Esophagus muscularis mucosa (tissue), 4 donors: ENCODE measurements at regions of chr17 and their contacts with region 1.

Region 1: GRCh38 chr17:76307299-76307965 is 644 bp downstream of the QRICH2 start:
- DNase-seq: no peak
- H3K4me3 ChIP-seq: no peak overlapping the region
- H3K27ac ChIP-seq: no peak overlapping the region
- H3K4me1 ChIP-seq: no peaks in the 10 kb centered on the region
- H3K27me3 ChIP-seq: no peaks in the 10 kb centered on the region
- CTCF ChIP-seq: no peak
- EP300 ChIP-seq: no peak
- POLR2A ChIP-seq: no peak

Region 2: DNA sequence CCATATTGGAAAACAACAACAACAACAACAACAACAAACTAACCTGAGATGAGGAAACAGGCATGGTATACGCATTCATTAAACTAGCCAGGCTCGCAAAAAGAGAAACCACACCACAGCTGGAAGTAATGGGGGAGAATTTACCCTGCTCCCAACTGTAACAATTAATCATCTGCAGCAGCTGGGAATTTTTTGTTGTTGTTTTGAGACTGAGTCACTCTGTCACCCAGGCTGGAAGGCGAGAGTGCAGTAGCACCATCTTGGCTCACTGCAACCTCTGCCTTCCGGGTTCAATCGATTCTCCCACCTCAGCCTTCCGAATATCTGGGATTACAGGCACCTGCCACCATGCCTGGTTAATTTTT is 30.0 kb after region 1 on chr17:
- intact Hi-C with region 1: no loop called
- DNase-seq: no peak
- H3K4me3 ChIP-seq: no peak overlapping the region
- H3K27ac ChIP-seq: no peak overlapping the region
- H3K4me1 ChIP-seq: peaks cover 5 to 14% (median 9%) of the 10 kb centered on the region in 4 donors
- H3K27me3 ChIP-seq: no peaks in the 10 kb centered on the region
- CTCF ChIP-seq: no peak
- EP300 ChIP-seq: no peak
- POLR2A ChIP-seq: no peak

Region 3: DNA sequence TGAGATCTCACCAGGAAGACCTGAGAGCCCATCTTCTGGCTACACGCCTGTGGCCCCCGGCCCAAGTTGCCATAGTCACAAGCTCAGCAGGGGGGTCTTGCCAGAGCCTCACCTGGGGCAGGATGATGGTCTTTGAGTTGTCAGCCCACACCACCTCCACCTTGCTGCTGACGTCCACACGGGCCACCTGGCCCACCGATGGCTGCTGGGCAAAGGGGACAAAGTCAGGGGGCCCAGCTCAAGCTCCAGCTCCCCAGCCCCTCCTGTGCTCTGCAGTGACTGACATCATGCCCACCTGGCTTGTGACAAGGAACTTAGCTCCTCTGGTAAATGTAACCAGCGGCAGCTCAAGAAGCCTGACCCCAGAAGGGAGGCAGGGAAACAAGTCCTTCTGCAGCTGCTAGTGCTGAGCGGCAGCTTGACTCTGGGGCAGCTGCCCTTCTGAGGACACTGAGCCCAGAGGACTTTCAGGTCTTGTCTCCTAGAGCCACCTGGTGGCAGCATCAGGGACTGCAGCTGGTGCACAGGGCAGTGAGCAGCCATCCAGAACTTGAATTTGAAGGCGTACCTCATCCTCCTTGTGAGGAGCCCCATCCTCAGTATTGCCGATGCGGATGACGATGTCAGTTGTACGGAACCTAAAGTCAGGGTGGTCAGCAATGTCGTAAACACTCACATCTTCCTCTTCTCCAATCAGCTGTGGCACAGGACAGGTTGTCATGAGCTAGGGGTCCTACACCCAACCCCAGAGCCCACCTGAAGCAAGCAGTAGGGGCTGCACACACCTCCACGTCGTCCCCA is 90.5 kb after region 1 on chr17:
- intact Hi-C with region 1: loop called (anchors 2 kb)
- DNase-seq: peak; percentile 97
- H3K4me3 ChIP-seq: no peak overlapping the region
- H3K27ac ChIP-seq: no peak overlapping the region
- H3K4me1 ChIP-seq: peaks cover 0 to 5% (median 4%) of the 10 kb centered on the region in 4 donors
- H3K27me3 ChIP-seq: no peaks in the 10 kb centered on the region
- CTCF ChIP-seq: peak; percentile 95 to 99 (median 98)
- EP300 ChIP-seq: no peak
- POLR2A ChIP-seq: no peak

Region 4: GRCh38 chr17:76501018-76501826 is 193.8 kb after region 1 on chr17 and contains the start of gene RHBDF2:
- intact Hi-C with region 1: loop called (anchors 10 kb)
- DNase-seq: peak; percentile 95
- H3K4me3 ChIP-seq: peak within 1 kb of the TSS; percentile 65 to 88 (median 68)
- H3K27ac ChIP-seq: peak within 1 kb of the TSS; percentile 77 to 85 (median 82)
- H3K4me1 ChIP-seq: peaks cover 39 to 53% (median 50%) of the 10 kb centered on the region in 4 donors
- H3K27me3 ChIP-seq: peaks cover 0 to 3% (median 0%) of the 10 kb centered on the region in 4 donors
- CTCF ChIP-seq: peak in 1 of 3 experiments; percentile 11
- EP300 ChIP-seq: no peak
- POLR2A ChIP-seq: peak; percentile 38
- total RNA-seq, gene RHBDF2: 12.9 to 22.5 (median 15.4) TPM